ENCODE measurements at regions of chr2 and their contacts with region 1.

Region 1: DNA sequence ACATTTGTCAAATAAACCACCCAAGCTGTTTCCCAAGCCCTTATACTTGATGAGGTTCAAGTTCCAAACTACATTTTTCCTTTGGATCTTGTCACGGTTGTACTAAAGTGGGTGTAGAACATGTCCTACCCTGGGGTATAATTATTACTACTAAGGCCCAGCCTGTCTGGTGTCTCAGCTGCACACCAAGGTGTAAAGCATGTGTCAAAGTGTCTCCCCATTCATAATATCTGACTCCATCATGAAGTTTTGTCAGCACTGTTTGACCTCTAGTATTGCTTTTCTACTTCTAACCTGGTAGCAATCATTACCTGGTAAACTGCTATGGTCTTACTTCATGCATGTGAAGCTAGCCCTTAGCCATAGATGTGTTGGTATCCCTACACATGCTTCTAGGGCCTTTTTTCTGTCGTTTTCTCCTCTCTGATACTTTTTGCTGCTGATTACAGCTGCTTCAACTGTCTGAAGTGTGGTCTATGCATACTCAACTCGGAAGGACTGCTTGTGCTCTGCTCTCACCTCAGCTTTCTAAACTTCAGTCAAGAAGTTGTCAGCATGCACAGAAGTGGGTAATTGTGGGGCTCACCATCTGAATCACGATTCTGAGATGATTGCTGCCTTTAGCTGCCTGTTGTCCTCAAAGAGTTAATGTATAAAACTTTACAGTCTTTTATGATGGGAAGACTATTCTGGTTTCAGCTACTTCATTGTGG is 445.7 kb upstream of the TRIB2 start:
- DNase-seq: no peak
- H3K4me3 Mint-ChIP-seq: no peak overlapping the region
- H3K27ac Mint-ChIP-seq: no peak overlapping the region
- H3K4me1 Mint-ChIP-seq: peaks cover 27% of the 10 kb centered on the region
- H3K27me3 Mint-ChIP-seq: peaks cover 11% of the 10 kb centered on the region

Region 2: GRCh38 chr2:12257476-12257875 is 13.6 kb before region 1 on chr2:
- intact Hi-C with region 1: no loop called
- DNase-seq: no peak
- H3K4me3 Mint-ChIP-seq: no peak overlapping the region
- H3K27ac Mint-ChIP-seq: no peak overlapping the region
- H3K4me1 Mint-ChIP-seq: no peaks in the 10 kb centered on the region
- H3K27me3 Mint-ChIP-seq: peaks cover 2% of the 10 kb centered on the region

Region 3: DNA sequence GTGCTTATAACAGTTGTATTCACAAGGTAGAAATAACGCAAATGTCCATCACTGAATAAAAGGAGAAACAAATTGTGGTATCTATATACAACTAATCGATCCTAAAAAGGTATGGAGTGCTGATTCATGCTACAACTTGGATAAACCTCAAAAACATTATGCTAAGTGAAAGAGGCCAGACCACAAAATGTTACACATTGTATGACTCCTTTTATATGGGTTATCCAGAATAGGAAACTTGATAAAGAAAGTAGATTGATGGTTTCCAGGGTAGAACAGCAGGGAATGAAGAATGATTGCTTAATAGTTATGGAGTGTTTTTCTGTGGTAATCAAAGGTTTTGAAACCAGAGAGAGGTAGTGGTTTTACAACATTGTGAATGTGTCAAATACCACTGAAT is 13.5 kb after region 1 on chr2:
- intact Hi-C with region 1: loop called (anchors 1 kb)
- DNase-seq: no peak
- H3K4me3 Mint-ChIP-seq: no peak overlapping the region
- H3K27ac Mint-ChIP-seq: no peak overlapping the region
- H3K4me1 Mint-ChIP-seq: peaks cover 26% of the 10 kb centered on the region
- H3K27me3 Mint-ChIP-seq: peaks cover 23% of the 10 kb centered on the region

Measured in activated T-helper 1 cell treated with anti-CD3 and anti-CD28 coated beads, Interleukin-12 subunit alpha, Interleukin-12 subunit beta, Interleukin-2, Interleukin-4 antibody, amounts not matched to agents 30 ng/mL and 10 ng/mL and 1 ng/mL, durations not matched to agents 14 hours and 24 hours and 36 hours (primary cell).